Gastrocnemius medialis (tissue), 4 donors: ENCODE measurements at regions of chr14 and their contacts with region 1.

Region 1: GRCh38 chr14:94689218-94689984 is 77.2 kb downstream of the SERPINA3 start:
- DNase-seq: peak in 1 of 2 donors; percentile 23
- ATAC-seq: peak; percentile 77 to 78
- H3K4me3 ChIP-seq: no peak overlapping the region
- H3K27ac ChIP-seq: no peak overlapping the region
- H3K4me1 ChIP-seq: peaks cover 0 to 3% of the 10 kb centered on the region in 2 donors
- H3K27me3 ChIP-seq: no peaks in the 10 kb centered on the region
- CTCF ChIP-seq: peak; percentile 77 to 94 (median 79)
- POLR2A ChIP-seq: no peak

Region 2: GRCh38 chr14:95098984-95099599 is 409.7 kb after region 1 on chr14:
- in situ Hi-C with region 1: loop called in 1 of 4 experiments (anchors 25 kb)
- intact Hi-C with region 1: no loop called
- DNase-seq: peak; percentile 29 to 56
- ATAC-seq: peak; percentile 58 to 77
- H3K4me3 ChIP-seq: no peak overlapping the region
- H3K27ac ChIP-seq: no peak overlapping the region
- H3K4me1 ChIP-seq: peaks cover 0 to 16% of the 10 kb centered on the region in 2 donors
- H3K27me3 ChIP-seq: no peaks in the 10 kb centered on the region
- CTCF ChIP-seq: peak in 4 of 5 experiments; percentile 45 to 70 (median 54)
- POLR2A ChIP-seq: no peak